GM18951 (cell line): ENCODE measurements at regions of chr9 and their contacts with region 1.

Region 1: GRCh38 chr9:20356403-20357035 is 265.8 kb downstream of the MLLT3 start:
- POLR2A ChIP-seq: no peak

Region 2: DNA sequence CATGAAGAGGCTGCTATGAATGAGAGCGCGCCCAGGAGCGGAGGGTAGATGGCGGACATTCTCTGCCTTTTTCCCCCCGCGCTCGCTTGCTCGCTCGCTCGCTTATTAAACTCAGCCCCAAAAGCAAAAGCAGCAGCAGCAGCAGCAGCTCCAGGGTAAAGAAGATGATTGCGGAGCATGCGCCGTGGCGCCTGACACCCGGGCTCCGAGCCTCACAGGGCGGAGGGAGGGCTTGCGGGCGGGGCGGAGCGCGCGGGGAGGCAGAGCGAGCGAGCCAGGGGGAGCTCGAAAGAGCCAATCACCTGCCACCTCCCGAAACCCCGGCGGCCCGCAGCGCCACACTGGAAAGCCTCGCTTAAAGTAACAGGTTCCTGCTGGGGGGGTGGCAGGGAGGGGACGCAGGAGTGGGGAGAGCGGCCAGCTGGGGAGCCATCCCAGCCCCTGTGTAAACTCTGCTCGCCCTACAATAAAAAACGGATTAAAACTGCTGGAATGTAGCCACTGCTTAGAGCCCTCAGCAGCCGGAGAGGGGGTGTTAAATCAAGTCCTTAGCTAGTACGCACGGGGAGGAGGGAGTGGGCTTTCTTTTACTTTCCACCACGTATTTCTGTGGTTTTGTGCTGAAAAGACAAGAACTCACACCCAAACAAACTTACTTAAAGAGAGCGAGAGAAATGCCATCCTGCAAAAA is 266.0 kb after region 1 on chr9 and contains the start of gene MLLT3:
- in situ Hi-C with region 1: loop called (anchors 10 kb)
- POLR2A ChIP-seq: peak; percentile 81

Region 3: GRCh38 chr9:20823051-20823450 is 466.5 kb after region 1 on chr9:
- in situ Hi-C with region 1: no loop called
- POLR2A ChIP-seq: no peak

Region 4: GRCh38 chr9:20950707-20951106 is 594.2 kb after region 1 on chr9:
- in situ Hi-C with region 1: loop called (anchors 10 kb)
- POLR2A ChIP-seq: no peak

Region 5: DNA sequence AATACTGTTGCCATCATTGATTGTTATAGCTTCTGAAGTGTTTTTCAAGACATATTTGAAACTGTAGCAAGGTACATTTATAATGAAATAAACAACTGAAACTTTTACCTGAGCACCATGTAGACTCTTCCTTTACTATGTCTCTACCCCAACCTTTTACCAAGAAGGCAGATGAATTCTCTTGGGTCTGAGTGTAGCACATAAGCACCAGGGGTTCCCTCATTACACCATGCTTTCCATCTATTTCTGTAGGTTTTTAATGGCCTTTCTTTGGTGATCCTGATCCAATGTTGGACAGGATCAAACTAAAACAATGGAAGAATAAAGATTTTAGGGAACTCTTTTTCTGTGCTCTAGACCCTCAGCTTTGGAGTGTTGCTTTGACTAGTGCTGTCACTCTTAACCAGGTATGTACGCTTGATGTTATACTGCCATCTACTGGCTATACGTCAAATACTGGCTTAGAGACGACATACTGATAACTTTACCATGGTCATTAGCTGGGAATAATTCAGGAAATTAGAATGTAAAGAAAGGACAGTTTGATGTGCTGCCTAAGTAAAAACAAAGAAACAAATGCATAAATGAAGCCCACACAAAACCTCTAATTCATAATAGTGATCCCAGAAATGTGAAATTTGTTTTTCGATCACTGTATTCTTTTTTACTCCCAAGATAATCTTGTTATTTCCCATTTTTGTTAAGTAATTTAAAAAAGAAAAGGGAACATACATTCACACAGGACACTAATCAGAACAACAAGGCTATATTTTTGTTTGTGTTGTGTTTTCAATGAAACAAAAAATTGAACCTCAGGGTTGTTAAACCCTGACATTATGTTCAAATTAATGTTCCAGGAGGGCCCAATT is 754.4 kb after region 1 on chr9:
- in situ Hi-C with region 1: loop called (anchors 25 kb)
- POLR2A ChIP-seq: no peak